ENCODE measurements at regions of chr5 and their contacts with region 1.

Region 1: GRCh38 chr5:154647114-154647760 is 107.9 kb upstream of the LARP1 start:
- DNase-seq: peak in 1 of 2 experiments; percentile 44
- H3K4me3 ChIP-seq: no peak overlapping the region
- H3K27ac ChIP-seq: no peak overlapping the region
- H3K4me1 ChIP-seq: 0 out of 2 replicates have a peak, but pooled peaks cover 4% of the 10 kb centered on the region
- H3K27me3 ChIP-seq: peaks cover 1% of the 10 kb centered on the region; the same call in 1 of the 2 replicates
- CTCF ChIP-seq: no peak

Region 2: DNA sequence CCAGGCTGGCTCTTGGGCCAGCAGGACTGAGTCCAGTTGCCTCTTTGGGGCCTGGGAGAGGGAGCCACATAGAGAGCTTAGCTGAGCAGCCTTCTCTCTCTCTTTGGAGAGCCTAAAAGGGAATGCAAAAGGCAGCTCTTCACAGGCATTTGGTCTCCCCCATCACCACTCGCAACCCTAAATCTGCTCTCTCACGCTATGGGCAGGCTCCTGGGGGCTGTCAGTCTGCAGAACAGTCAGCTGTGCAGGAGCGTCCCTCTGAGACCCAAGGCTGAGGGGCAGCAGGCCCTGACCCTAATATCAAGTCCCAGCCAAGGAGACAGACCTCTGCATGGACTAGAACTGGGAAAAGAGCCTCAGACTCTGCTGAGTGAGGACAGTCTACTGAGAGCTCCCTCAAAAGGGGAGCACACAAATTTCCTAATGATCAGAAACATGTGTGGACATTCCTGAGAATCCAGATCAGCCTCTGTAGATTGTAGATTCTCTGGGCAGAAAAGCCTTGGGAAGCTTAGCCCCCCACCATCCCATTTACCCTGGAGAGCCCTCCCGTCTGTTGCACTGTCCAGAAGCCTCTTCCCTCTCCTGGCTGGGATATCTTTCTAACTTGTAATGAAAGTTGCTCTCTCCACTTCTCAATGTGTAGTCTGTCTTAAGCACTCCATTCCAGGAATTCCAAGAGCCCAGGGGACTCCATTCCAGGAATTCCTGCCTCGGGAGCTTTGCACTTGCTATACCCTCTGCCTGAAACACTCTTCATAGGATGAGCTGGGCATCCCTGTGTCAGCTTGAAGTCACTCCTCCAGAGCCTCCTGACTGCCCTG is 687.9 kb before region 1 on chr5:
- CTCF ChIA-PET with region 1: no interaction called
- POLR2A ChIA-PET with region 1: no interaction called
- intact Hi-C with region 1: no loop called
- DNase-seq: no peak
- H3K4me3 ChIP-seq: no peak overlapping the region
- H3K27ac ChIP-seq: no peak overlapping the region
- H3K4me1 ChIP-seq: no peaks in the 10 kb centered on the region
- H3K27me3 ChIP-seq: peaks cover 68% of the 10 kb centered on the region
- CTCF ChIP-seq: no peak

Region 3: GRCh38 chr5:154754460-154755360 is 107.5 kb after region 1 on chr5:
- CTCF ChIA-PET with region 1: no interaction called
- POLR2A ChIA-PET with region 1: no interaction called
- intact Hi-C with region 1: loop called (anchors 2 kb)
- DNase-seq: peak; percentile 96 to 100
- H3K4me3 ChIP-seq: peak overlapping the region; percentile 77
- H3K27ac ChIP-seq: peak overlapping the region; percentile 95
- H3K4me1 ChIP-seq: peaks cover 33% of the 10 kb centered on the region
- H3K27me3 ChIP-seq: no peaks in the 10 kb centered on the region
- CTCF ChIP-seq: no peak; the same call in 1 of the 2 replicates

Region 4: GRCh38 chr5:154811653-154812365 is 164.6 kb after region 1 on chr5:
- CTCF ChIA-PET with region 1: no interaction called
- POLR2A ChIA-PET with region 1: no interaction called
- intact Hi-C with region 1: loop called (anchors 1 kb)
- DNase-seq: peak; percentile 50 to 60
- H3K4me3 ChIP-seq: no peak overlapping the region
- H3K27ac ChIP-seq: no peak overlapping the region
- H3K4me1 ChIP-seq: no peaks in the 10 kb centered on the region
- H3K27me3 ChIP-seq: no peaks in the 10 kb centered on the region
- CTCF ChIP-seq: peak; percentile 93

Region 5: GRCh38 chr5:155004138-155004744 is 357.0 kb after region 1 on chr5:
- CTCF ChIA-PET with region 1: no interaction called
- POLR2A ChIA-PET with region 1: no interaction called
- intact Hi-C with region 1: loop called (anchors 1 kb)
- DNase-seq: peak in 1 of 2 experiments; percentile 38
- H3K4me3 ChIP-seq: no peak overlapping the region
- H3K27ac ChIP-seq: no peak overlapping the region
- H3K4me1 ChIP-seq: no peaks in the 10 kb centered on the region
- H3K27me3 ChIP-seq: peaks cover 10% of the 10 kb centered on the region; the same call in 1 of the 2 replicates
- CTCF ChIP-seq: peak; percentile 74

Region 6: GRCh38 chr5:155147222-155147621 is 500.0 kb after region 1 on chr5:
- CTCF ChIA-PET with region 1: no interaction called
- POLR2A ChIA-PET with region 1: no interaction called
- intact Hi-C with region 1: loop called (anchors 10 kb)
- DNase-seq: no peak
- H3K4me3 ChIP-seq: no peak overlapping the region
- H3K27ac ChIP-seq: no peak overlapping the region
- H3K4me1 ChIP-seq: no peaks in the 10 kb centered on the region
- H3K27me3 ChIP-seq: peaks cover 11% of the 10 kb centered on the region; the same call in 1 of the 2 replicates
- CTCF ChIP-seq: no peak; the same call in 1 of the 2 replicates

Measured in PC-9 (cell line).